ENCODE measurements at regions of chr15 and their contacts with region 1.

Region 1: GRCh38 chr15:100341662-100342560 is at the start of gene ADAMTS17:
- DNase-seq: peak; percentile 94
- ATAC-seq: peak; percentile 95
- H3K4me3 ChIP-seq: peak within 1 kb of the TSS; percentile 61 to 68
- H3K27ac ChIP-seq: peak within 1 kb of the TSS; percentile 30; the same call in 1 of the 2 replicates
- H3K4me1 ChIP-seq: peaks cover 3 to 13% of the 10 kb centered on the region in 2 experiments; a peak in 2 of 4 replicates
- H3K27me3 ChIP-seq: no peaks in the 10 kb centered on the region
- CTCF ChIP-seq: peak; percentile 78 to 86 (median 86)
- POLR2A ChIP-seq: peak; percentile 41
- RAD21 ChIP-seq: peak; percentile 70
- total RNA-seq, gene ADAMTS17: 4.2 TPM

Region 2: DNA sequence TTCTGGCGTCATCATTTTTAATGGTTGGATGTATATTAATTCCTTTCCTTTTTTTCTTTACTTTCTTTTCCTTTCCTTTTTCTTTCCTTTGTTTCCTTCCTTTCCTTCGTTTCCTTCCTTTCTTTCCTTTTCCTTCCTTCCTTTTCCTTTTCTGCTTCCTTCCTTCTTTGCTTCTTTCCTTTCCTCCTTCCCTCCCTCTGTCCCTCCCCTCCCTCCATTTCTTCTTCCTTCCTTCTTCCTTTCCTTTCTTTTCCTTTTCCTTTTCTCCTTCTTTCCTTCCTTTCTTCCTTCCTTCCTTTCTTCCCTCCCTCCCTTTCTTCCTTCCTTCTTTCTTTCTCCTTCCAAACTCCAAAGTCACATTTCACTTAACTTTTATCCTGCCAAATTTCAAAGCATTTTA is 553.7 kb before region 1 on chr15:
- CTCF ChIA-PET with region 1: no interaction called
- POLR2A ChIA-PET with region 1: no interaction called
- RAD21 ChIA-PET with region 1: no interaction called
- intact Hi-C with region 1: loop called (anchors 5 kb)
- DNase-seq: no peak
- ATAC-seq: no peak
- H3K4me3 ChIP-seq: no peak overlapping the region
- H3K27ac ChIP-seq: no peak overlapping the region
- H3K4me1 ChIP-seq: no peaks in the 10 kb centered on the region
- H3K27me3 ChIP-seq: peaks cover 15% of the 10 kb centered on the region
- CTCF ChIP-seq: no peak
- POLR2A ChIP-seq: no peak
- RAD21 ChIP-seq: no peak

Region 3: DNA sequence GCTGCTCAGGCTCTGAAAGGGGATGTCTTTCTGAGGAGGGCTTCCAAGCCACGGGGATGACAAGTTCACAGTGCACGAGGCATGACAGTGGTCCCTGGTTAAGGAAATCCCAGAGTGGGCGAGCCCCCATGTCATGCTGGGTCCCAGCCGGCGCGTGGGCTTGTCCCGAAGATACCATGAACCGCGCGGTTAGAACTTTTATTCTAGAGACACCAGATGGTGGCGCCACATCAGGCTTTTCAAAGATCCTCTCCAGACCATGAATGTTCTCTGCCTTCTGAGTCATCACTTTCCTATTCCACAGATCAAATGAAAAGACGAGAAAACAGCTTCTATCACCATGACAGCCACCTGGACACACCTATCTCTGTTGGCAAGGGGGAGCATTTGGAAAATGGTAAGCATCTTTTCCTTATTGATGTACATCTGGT is 380.9 kb before region 1 on chr15:
- CTCF ChIA-PET with region 1: no interaction called
- POLR2A ChIA-PET with region 1: no interaction called
- RAD21 ChIA-PET with region 1: no interaction called
- intact Hi-C with region 1: loop called (anchors 1 kb)
- DNase-seq: peak; percentile 51
- ATAC-seq: peak; percentile 79
- H3K4me3 ChIP-seq: no peak overlapping the region
- H3K27ac ChIP-seq: no peak overlapping the region
- H3K4me1 ChIP-seq: no peaks in the 10 kb centered on the region
- H3K27me3 ChIP-seq: no peaks in the 10 kb centered on the region
- CTCF ChIP-seq: peak; percentile 42 to 59 (median 45); a peak in 5 of 6 replicates
- POLR2A ChIP-seq: no peak
- RAD21 ChIP-seq: peak; percentile 67

Region 4: DNA sequence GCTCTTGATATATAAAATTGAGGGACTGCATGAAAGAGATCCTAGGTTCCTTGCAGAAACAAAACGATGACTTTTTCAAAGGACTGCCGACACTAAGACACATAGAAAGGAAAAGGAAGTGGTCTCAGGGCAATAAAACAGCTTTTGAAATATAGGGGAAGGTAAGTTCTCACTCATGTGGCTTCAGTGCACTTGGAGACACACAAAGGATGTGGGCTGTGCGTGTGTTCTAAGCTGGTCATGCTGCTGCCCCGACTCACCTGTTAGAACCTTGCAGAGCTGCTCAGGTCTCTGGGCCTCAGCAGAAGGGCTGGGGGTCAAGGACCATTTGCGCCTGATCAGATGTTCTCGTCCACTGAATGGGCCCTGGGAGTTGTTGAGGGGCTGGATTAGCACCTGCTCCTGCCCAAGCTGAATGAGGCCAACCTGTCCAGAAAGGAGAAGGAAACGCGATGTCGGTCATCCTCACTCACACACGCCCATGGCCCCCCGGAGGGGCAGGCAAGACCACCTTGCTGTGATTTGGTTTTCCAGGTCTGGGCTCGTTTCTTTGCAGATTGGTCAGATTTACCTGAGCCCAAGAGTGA is 11.2 kb before region 1 on chr15:
- CTCF ChIA-PET with region 1: interaction called, 10 read pairs
- POLR2A ChIA-PET with region 1: interaction called, 3 read pairs
- RAD21 ChIA-PET with region 1: no interaction called
- intact Hi-C with region 1: no loop called
- DNase-seq: no peak
- ATAC-seq: no peak
- H3K4me3 ChIP-seq: no peak overlapping the region
- H3K27ac ChIP-seq: no peak overlapping the region
- H3K4me1 ChIP-seq: no peaks in the 10 kb centered on the region
- H3K27me3 ChIP-seq: no peaks in the 10 kb centered on the region
- CTCF ChIP-seq: no peak
- POLR2A ChIP-seq: no peak
- RAD21 ChIP-seq: no peak

Measured in HCT116 (cell line).